ENCODE measurements at regions of chr12 and their contacts with region 1.

Region 1: GRCh38 chr12:107093417-107094182 is at the start of gene CRY1:
- DNase-seq: peak; percentile 85 to 96 (median 92)
- ATAC-seq: peak; percentile 75
- H3K4me3 ChIP-seq: peak within 1 kb of the TSS; percentile 87 to 97
- H3K4me3 Mint-ChIP-seq: no peak within 1 kb of the TSS
- H3K27ac ChIP-seq: peak within 1 kb of the TSS; percentile 97 to 99
- H3K27ac Mint-ChIP-seq: no peak within 1 kb of the TSS
- H3K4me1 ChIP-seq: peaks cover 20% of the 10 kb centered on the region
- H3K4me1 Mint-ChIP-seq: peaks cover 16% of the 10 kb centered on the region
- H3K27me3 ChIP-seq: peaks cover 0 to 4% of the 10 kb centered on the region in 2 experiments
- H3K27me3 Mint-ChIP-seq: peaks cover 10% of the 10 kb centered on the region
- CTCF ChIP-seq: no peak
- total RNA-seq, gene CRY1: 80.8 to 83.0 TPM

Region 2: GRCh38 chr12:106247674-106248311 is 845.8 kb before region 1 on chr12 and contains the start of gene CKAP4:
- CTCF ChIA-PET with region 1: no interaction called
- POLR2A ChIA-PET with region 1: no interaction called
- intact Hi-C with region 1: loop called in 1 of 2 experiments (anchors 2 kb)
- DNase-seq: peak; percentile 10 to 83 (median 58)
- ATAC-seq: peak; percentile 55
- H3K4me3 ChIP-seq: peak within 1 kb of the TSS; percentile 66 to 84
- H3K4me3 Mint-ChIP-seq: peak within 1 kb of the TSS; percentile 86
- H3K27ac ChIP-seq: peak within 1 kb of the TSS; percentile 72 to 73
- H3K27ac Mint-ChIP-seq: peak within 1 kb of the TSS; percentile 95
- H3K4me1 ChIP-seq: peaks cover 32% of the 10 kb centered on the region
- H3K4me1 Mint-ChIP-seq: peaks cover 35% of the 10 kb centered on the region
- H3K27me3 ChIP-seq: no peaks in the 10 kb centered on the region
- H3K27me3 Mint-ChIP-seq: no peaks in the 10 kb centered on the region
- CTCF ChIP-seq: no peak
- total RNA-seq, gene CKAP4: 19.3 to 19.7 TPM

Region 3: GRCh38 chr12:106551410-106551809 is 542.2 kb before region 1 on chr12:
- CTCF ChIA-PET with region 1: no interaction called
- POLR2A ChIA-PET with region 1: no interaction called
- intact Hi-C with region 1: no loop called
- DNase-seq: no peak
- ATAC-seq: no peak
- H3K4me3 ChIP-seq: no peak overlapping the region
- H3K4me3 Mint-ChIP-seq: no peak overlapping the region
- H3K27ac ChIP-seq: no peak overlapping the region
- H3K27ac Mint-ChIP-seq: no peak overlapping the region
- H3K4me1 ChIP-seq: no peaks in the 10 kb centered on the region
- H3K4me1 Mint-ChIP-seq: no peaks in the 10 kb centered on the region
- H3K27me3 ChIP-seq: no peaks in the 10 kb centered on the region
- H3K27me3 Mint-ChIP-seq: peaks cover 32% of the 10 kb centered on the region
- CTCF ChIP-seq: no peak

Region 4: DNA sequence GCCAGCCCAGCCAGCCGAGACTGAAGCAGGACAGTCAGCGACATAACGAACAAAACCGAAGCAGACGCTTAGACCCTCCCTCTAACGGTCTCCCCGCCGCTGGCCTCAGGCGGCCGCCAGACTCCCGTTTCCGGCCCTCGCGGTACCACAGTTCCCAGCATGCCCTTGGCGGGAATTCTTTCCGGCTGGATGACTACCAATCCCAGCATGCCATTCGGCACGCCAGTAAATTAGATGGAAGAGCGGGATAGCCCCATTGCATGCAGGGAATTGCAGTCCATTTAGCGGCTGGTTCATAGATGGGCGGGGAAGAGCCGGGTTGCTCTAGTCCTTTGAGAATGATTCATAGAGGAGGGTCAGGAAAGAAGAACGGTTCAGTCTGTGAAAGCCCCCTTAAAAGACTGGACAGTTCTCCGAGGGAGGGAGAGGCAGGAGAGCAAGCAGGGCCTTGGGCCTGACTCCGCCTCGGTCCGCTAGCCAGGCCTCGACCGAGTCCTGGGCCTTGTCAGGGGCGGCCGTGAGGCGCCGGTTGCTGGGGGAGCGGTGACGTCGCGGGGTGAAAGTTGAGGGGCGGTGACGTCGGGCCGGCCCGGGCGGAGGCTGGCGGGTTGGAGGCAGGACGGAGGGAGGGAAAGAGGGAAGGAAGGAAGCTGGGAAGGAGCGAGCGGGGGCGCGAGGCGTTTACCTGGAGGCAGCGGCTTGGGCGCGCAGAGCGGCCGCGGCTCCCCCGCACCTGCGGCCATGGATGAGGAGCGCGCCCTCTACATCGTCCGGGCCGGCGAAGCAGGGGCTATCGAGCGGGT is 319.4 kb before region 1 on chr12 and contains the start of gene RIC8B:
- CTCF ChIA-PET with region 1: no interaction called
- POLR2A ChIA-PET with region 1: no interaction called
- intact Hi-C with region 1: loop called (anchors 10 kb)
- DNase-seq: peak; percentile 56 to 92 (median 74)
- ATAC-seq: peak; percentile 81
- H3K4me3 ChIP-seq: peak within 1 kb of the TSS; percentile 80 to 96
- H3K4me3 Mint-ChIP-seq: peak within 1 kb of the TSS; percentile 96
- H3K27ac ChIP-seq: peak within 1 kb of the TSS; percentile 78 to 96
- H3K27ac Mint-ChIP-seq: peak within 1 kb of the TSS; percentile 99
- H3K4me1 ChIP-seq: peaks cover 19% of the 10 kb centered on the region
- H3K4me1 Mint-ChIP-seq: peaks cover 40% of the 10 kb centered on the region
- H3K27me3 ChIP-seq: no peaks in the 10 kb centered on the region
- H3K27me3 Mint-ChIP-seq: no peaks in the 10 kb centered on the region
- CTCF ChIP-seq: no peak
- total RNA-seq, gene RIC8B: 5.6 to 6.4 TPM

Region 5: DNA sequence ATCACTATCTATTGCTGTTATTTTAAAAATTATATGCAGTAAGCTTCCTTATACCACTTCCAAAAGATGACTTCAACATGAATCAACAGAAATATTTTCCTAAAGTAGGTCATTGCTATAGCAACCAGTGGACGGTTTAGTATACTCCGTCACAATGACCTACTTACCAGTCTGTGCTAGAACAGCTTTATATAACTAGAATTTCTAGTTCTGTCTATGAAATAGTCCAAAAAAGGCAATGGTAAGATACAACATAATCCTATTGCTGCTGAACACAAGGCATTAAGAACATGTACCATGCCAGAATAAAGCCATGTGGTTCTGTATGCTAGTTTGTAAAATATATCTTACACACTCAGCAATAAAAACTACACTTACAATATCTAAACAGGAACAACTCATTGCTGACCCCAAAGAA is 66.0 kb before region 1 on chr12:
- CTCF ChIA-PET with region 1: no interaction called
- POLR2A ChIA-PET with region 1: no interaction called
- intact Hi-C with region 1: loop called (anchors 5 kb)
- DNase-seq: peak in 2 of 9 experiments; percentile 84 to 89
- ATAC-seq: peak; percentile 89
- H3K4me3 ChIP-seq: no peak overlapping the region
- H3K4me3 Mint-ChIP-seq: no peak overlapping the region
- H3K27ac ChIP-seq: peak overlapping the region; percentile 54 to 94
- H3K27ac Mint-ChIP-seq: peak overlapping the region; percentile 90
- H3K4me1 ChIP-seq: peaks cover 16% of the 10 kb centered on the region
- H3K4me1 Mint-ChIP-seq: peaks cover 59% of the 10 kb centered on the region
- H3K27me3 ChIP-seq: no peaks in the 10 kb centered on the region
- H3K27me3 Mint-ChIP-seq: no peaks in the 10 kb centered on the region
- CTCF ChIP-seq: no peak

Region 6: DNA sequence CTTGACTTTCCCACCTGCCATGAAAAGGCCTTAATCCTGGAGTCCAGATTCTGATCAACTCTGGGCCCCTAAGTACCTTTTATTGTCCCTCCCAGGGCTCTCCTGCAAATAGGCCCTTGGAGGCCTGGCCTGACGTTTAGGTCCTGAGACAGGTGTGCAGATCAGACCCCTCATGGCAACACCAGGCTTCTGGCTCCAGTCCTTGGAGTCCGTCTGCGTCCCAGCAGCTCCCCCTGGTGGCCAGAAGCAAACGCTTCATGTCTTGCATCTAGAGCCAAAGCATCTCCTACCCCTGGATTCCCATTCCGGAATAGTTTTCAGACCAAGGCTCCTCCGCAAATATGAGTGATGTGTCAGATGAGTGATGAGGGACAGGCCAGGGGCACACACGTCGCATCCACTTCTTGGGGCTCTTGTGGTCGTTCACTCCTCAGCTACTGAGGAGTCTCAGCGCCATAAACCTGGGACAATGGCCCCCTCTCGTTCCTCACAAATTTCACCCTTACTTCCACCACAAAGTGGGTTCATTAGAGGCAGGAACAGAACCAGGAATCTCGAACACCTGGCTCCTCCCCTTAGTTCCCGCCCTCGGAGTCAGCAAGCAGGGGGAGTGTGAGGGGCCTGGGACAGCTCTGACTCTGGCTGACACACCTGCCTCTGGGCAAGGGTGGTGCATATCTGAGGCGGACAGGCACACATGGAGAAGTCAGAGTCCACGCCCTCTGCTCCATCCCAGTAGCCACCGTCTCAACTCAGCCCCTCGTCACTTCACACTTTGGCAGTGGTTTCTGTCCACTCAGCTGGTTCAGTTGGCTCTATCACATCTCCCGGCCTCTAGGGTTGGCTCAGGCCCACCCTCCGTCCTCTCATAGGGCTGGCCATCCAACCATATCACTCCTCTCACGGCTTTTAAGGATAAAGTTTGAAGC is 514.1 kb after region 1 on chr12:
- CTCF ChIA-PET with region 1: interaction called, 4 read pairs
- POLR2A ChIA-PET with region 1: no interaction called
- intact Hi-C with region 1: loop called in 1 of 2 experiments (anchors 1 kb)
- DNase-seq: peak; percentile 57 to 89 (median 83)
- ATAC-seq: peak; percentile 84
- H3K4me3 ChIP-seq: no peak overlapping the region
- H3K4me3 Mint-ChIP-seq: no peak overlapping the region
- H3K27ac ChIP-seq: no peak overlapping the region
- H3K27ac Mint-ChIP-seq: no peak overlapping the region
- H3K4me1 ChIP-seq: no peaks in the 10 kb centered on the region
- H3K4me1 Mint-ChIP-seq: no peaks in the 10 kb centered on the region
- H3K27me3 ChIP-seq: no peaks in the 10 kb centered on the region
- H3K27me3 Mint-ChIP-seq: no peaks in the 10 kb centered on the region
- CTCF ChIP-seq: peak; percentile 94

Region 7: DNA sequence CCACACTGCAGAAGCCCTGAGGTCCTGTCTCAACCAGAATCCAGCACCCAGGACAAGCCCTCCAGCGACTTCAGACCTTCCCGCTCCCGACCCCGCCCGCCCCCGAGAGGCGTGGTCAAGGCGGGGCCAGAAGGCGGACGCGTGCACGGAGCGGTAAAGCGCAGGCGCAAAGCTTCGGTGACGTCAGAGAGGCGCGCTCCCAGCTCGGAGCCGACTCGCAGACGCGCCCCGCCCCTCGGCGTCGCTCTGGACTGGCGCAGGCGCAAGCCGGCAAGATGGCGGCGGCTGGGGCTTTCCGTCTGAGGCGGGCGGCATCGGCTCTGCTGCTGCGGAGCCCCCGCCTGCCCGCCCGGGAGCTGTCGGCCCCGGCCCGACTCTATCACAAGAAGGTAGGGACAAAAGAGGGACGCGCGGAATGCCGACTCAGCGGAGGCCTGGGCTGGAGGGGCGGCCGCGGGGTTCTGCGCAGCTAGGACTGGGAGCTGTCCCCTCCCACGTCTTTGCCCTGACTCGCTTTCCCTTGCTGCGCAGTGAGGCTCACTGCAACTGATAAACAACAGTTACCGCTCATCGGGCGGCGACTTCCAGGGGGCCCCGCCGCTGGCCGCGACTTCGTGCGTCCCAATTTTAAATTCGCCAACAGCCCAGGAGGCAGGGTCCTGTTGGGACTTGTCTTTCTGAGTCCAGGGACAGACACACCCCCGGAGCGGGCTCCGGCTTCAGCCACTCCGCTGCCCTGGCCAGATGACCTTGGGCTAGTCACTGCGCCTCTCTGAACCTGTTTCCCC is 1468.9 kb after region 1 on chr12 and contains the start of gene ISCU:
- CTCF ChIA-PET with region 1: no interaction called
- POLR2A ChIA-PET with region 1: no interaction called
- intact Hi-C with region 1: loop called (anchors 2 to 5 kb)
- DNase-seq: peak; percentile 97 to 100 (median 99)
- ATAC-seq: peak; percentile 70
- H3K4me3 ChIP-seq: peak within 1 kb of the TSS; percentile 90 to 96
- H3K4me3 Mint-ChIP-seq: peak within 1 kb of the TSS; percentile 100
- H3K27ac ChIP-seq: peak within 1 kb of the TSS; percentile 92 to 94
- H3K27ac Mint-ChIP-seq: peak within 1 kb of the TSS; percentile 100
- H3K4me1 ChIP-seq: peaks cover 44% of the 10 kb centered on the region
- H3K4me1 Mint-ChIP-seq: peaks cover 55% of the 10 kb centered on the region
- H3K27me3 ChIP-seq: no peaks in the 10 kb centered on the region
- H3K27me3 Mint-ChIP-seq: no peaks in the 10 kb centered on the region
- CTCF ChIP-seq: no peak
- total RNA-seq, gene ISCU: 254 to 260 TPM

Measured in CD8-positive, alpha-beta T cell (primary cell).